HCT116 (cell line): ENCODE measurements at regions of chr4 and their contacts with region 1.

Region 1: GRCh38 chr4:166458756-166459155 is 585.7 kb downstream of the TLL1 start:
- DNase-seq: no peak
- ATAC-seq: no peak
- H3K4me3 ChIP-seq: no peak overlapping the region
- H3K27ac ChIP-seq: no peak overlapping the region
- H3K4me1 ChIP-seq: no peaks in the 10 kb centered on the region
- H3K27me3 ChIP-seq: no peaks in the 10 kb centered on the region
- CTCF ChIP-seq: no peak
- POLR2A ChIP-seq: no peak
- RAD21 ChIP-seq: no peak

Region 2: DNA sequence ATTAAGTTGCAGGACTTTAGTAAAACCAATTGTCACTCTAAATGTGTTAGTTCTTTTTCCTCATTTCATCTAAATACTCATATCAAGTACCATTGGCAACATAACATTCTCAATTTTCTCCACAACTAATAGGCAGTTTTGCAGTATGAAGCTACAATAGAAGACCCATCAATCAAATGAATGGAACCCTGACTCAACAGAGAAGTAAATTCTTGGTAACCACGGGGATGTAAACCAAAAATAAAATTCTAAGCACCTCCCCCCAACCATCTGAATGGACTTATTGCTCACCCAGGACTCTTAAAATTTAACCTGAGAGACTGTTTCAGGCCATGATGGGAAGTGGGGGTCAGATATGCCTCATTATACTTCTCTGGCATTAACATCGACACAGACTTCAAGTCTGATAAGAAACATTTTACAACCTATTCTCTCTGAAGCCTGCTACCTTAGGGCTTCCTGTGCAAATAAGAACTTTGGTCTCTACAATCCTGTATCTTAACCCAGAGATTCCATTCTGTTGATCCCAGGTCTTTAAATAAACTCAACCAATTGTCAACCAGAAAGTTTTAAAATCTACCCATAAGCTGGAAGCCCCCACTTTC is 35.2 kb after region 1 on chr4:
- CTCF ChIA-PET with region 1: no interaction called
- POLR2A ChIA-PET with region 1: no interaction called
- RAD21 ChIA-PET with region 1: no interaction called
- intact Hi-C with region 1: loop called (anchors 5 kb)
- DNase-seq: no peak
- ATAC-seq: no peak
- H3K4me3 ChIP-seq: no peak overlapping the region
- H3K27ac ChIP-seq: no peak overlapping the region
- H3K4me1 ChIP-seq: no peaks in the 10 kb centered on the region
- H3K27me3 ChIP-seq: no peaks in the 10 kb centered on the region
- CTCF ChIP-seq: no peak
- POLR2A ChIP-seq: no peak
- RAD21 ChIP-seq: no peak